Posterior vena cava (tissue), 2 donors: ENCODE measurements at regions of chr11 and their contacts with region 1.

Region 1: GRCh38 chr11:47924184-47924691 is 56.1 kb upstream of the PTPRJ start:
- DNase-seq: peak; percentile 74

Region 2: GRCh38 chr11:47819743-47820142 is 104.5 kb before region 1 on chr11:
- intact Hi-C with region 1: no loop called
- DNase-seq: no peak

Region 3: DNA sequence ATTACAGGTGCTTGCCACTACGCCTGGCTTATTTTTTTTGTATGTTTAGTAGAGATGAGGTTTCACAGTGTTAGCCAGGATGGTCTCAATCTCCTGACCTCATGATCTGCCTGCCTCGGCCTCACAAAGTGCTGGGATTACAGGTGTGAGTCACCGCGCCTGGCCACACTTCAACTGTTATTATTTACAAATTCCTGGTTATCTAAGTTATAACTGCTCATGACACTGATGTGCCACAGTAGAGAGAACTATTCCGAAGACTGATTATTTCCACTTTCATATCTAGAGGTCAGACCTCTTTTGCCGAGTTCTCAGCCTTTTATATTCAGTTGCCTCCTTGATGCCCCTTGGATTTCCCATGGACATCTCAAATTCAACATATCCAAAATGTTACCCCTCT is 72.2 kb before region 1 on chr11:
- intact Hi-C with region 1: loop called in 1 of 2 experiments (anchors 2 kb)
- DNase-seq: no peak

Region 4: DNA sequence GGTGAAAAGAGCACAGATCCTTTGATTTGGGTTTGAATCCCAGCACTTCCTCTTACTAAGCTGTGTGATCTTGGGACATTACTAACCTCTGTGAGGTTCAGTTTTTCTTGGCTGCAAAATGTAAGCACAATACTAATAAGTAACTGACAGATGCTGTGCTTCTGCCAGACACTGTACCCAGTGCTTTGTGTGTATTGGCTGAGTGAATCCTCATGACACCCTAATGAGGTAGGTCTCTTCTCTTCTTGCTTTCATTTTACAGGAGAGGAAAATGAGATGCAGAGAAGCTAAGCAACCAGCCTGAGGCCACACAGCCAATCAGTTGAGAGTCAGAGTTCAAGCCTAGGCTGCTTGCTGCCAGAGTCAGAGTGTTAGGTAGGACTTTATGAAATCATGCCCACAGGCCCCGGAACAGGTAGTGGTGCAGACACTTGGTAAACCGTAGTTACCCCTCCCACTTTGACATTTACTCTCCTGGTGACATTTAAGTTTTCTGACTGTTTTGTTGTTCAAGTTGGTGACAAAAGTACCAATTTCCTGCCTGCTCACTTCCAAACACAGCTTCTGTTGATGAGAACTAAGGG is 77.3 kb after region 1 on chr11:
- intact Hi-C with region 1: no loop called
- DNase-seq: no peak